GM13976 (cell line): ENCODE measurements at regions of chr3 and their contacts with region 1.

Region 1: GRCh38 chr3:50192689-50193141 is 1.3 kb downstream of the GNAT1 start:
- DNase-seq: peak; percentile 90
- CTCF ChIP-seq: peak; percentile 92

Region 2: DNA sequence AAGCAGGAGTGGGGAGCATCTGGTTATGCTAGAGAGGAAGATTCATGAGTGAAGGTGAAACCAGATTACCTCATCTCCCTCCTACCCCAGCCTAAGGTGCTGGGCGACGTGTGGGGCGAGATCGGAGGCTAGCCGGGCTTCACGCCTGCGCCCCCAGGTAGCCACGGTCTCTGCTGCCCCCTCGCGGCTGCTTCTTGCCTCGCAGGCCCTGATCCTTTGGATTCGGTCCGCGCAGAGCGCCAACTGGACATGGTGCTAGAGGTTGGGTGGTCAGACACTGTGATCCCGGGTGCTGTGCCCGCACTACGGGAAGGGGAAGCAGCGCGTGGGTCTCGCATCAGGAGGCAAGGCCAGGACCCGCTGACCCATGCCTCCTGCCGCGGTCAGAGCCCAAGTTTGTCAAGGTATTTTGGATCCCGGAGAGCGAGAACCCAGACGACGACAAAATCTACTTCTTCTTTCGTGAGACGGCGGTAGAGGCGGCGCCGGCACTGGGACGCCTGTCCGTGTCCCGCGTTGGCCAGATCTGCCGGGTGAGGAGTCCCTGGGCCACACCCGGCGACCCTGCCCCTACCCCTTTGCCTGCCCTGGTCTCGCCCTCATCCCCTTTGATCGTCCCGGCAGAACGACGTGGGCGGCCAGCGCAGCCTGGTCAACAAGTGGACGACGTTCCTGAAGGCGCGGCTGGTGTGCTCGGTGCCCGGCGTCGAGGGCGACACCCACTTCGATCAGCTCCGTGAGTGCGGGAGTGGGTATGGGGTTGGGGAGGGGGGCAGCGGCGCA is 80.4 kb after region 1 on chr3:
- in situ Hi-C with region 1: loop called (anchors 5 kb)
- DNase-seq: peak; percentile 98
- CTCF ChIP-seq: peak; percentile 99